CD4-positive, alpha-beta memory T cell (primary cell): ENCODE measurements at regions of chr19 and their contacts with region 1.

Region 1: DNA sequence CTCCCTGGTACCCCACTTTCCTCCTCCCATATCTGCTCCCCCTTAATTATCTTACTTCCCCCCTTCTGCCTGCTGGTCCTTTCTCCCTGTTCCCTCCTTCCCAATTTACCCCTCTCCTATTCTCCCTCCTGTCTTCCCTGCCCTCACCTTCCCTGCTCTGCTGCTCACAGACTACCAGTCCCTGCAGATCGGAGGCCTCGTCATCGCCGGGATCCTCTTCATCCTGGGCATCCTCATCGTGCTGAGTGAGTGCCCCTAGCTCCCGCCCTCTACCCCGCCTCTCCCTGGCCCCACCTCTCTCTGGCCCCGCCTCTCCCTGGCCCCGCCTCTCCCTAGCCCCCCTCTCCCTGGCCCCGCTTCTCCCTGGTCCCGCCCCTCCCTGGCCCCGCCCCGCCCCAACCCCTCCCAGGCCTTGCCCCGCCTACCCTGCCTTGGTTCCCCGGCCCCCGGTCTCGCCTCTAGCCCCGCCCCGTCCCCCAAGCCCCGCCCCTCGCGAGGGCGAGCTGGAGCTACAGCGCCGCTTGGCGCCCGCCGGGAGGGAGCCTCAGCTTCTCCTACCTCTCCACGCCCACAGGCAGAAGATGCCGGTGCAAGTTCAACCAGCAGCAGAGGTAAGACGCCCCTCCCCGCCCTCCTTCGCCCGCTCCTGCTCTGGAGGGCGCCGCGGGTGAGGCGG is 2.0 kb upstream of the FXYD7 start:
- DNase-seq: peak; percentile 92 to 94 (median 93)
- H3K4me3 ChIP-seq: peak overlapping the region; percentile 24 to 75
- H3K4me3 Mint-ChIP-seq: peak overlapping the region; percentile 82 to 96 (median 88)
- H3K27ac ChIP-seq: no peak overlapping the region
- H3K27ac Mint-ChIP-seq: peak overlapping the region; percentile 88 to 96 (median 90)
- H3K4me1 ChIP-seq: peaks cover 46% of the 10 kb centered on the region
- H3K4me1 Mint-ChIP-seq: peaks cover 28 to 53% (median 39%) of the 10 kb centered on the region in 4 donors
- H3K27me3 ChIP-seq: no peaks in the 10 kb centered on the region
- H3K27me3 Mint-ChIP-seq: no peaks in the 10 kb centered on the region

Region 2: DNA sequence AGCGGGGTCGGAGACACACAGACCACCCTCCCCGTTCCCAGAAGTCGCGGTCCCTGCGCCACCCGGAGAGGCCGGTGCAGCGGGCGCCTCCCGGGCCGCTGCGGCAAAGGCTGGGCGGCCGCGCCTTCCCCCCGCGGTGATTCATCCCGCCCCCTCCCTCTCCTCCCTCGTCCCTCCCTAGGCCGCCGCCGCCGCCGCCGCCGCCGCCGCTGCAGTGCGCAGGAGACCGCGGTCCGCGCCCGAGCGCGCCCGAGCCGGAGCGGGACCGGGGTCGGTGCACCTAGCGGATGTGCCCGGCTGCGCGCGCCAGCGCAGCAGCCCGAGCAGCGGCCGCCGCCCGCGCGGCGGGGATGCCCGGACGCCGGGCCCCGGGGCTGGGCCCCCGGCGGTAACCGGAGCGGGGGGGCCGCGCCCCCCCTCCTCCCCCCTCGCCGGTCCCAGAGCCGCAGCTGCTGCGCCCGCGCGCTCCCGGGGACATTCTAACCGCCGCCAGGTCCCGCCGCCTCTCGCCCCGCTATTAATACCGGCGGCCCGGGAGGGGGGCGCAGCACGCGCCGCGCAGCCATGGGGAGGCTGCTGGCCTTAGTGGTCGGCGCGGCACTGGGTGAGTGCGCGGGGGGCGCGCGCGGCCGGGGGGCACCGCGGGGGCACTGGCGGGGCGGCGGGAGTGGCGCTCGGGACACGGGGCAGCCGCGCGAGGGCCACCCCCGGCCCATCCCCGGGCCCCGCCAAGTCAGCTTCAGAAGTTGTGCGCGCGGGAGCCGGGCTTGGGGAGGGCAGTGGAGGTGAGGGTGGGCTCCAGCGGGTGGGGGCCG is 110.6 kb before region 1 on chr19 and contains the start of gene SCN1B:
- CTCF ChIA-PET with region 1: no interaction called
- POLR2A ChIA-PET with region 1: no interaction called
- intact Hi-C with region 1: no loop called
- DNase-seq: peak; percentile 39 to 67 (median 42)
- H3K4me3 ChIP-seq: peak within 1 kb of the TSS in 1 of 2 donors; percentile 35
- H3K4me3 Mint-ChIP-seq: peak within 1 kb of the TSS; percentile 75 to 88 (median 84)
- H3K27ac ChIP-seq: no peak within 1 kb of the TSS
- H3K27ac Mint-ChIP-seq: peak within 1 kb of the TSS in 4 of 7 donors; percentile 36 to 71 (median 44)
- H3K4me1 ChIP-seq: peaks cover 13% of the 10 kb centered on the region
- H3K4me1 Mint-ChIP-seq: peaks cover 7 to 10% (median 8%) of the 10 kb centered on the region in 4 donors
- H3K27me3 ChIP-seq: no peaks in the 10 kb centered on the region
- H3K27me3 Mint-ChIP-seq: peaks cover 7% of the 10 kb centered on the region in 2 donors
- total RNA-seq, gene SCN1B: 1.4 to 1.5 TPM

Region 3: DNA sequence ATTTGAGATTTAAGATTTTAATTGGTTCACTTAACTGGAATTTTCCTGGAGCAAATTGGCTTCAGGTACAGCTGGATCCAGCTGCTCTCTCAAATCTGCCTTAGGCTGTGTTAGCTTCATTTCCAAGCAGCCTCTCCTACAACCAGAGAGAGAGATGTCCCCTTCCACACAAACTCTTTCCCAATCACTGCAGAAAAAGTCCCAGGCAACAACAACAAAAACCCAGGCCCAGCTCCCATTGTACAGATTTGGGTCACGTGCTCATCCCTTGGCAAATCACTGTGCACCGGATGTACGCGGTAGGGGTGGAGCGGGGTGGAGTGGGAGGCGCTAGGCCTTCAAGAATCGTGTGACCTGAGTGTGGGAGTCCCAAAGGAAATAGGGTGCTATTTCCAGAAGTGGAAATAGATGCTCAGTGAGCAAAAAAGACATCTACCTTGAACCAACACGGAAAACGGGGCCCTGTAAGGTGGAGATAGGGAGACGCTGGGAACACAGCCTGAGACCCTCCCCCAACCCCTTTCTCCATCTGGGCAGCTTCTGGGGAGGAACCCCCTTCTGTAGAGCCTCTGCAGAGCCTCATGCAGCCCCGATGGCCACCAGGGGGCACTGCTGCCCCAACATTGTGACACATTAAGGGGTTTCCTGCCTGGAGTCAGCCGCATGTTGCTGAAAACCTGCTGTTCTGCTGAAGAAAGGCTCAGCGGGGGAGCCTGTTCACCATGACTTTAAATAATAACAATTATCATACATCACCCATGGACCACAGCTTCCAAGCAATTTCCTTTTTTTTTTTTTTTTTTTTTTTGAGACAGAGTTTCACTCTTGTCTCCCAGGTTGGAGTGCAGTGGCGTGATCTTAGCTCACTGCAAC is 74.2 kb before region 1 on chr19:
- CTCF ChIA-PET with region 1: interaction called, 26 read pairs
- POLR2A ChIA-PET with region 1: interaction called, 3 read pairs
- intact Hi-C with region 1: loop called (anchors 1 kb)
- DNase-seq: peak; percentile 83 to 85 (median 85)
- H3K4me3 ChIP-seq: no peak overlapping the region
- H3K4me3 Mint-ChIP-seq: no peak overlapping the region
- H3K27ac ChIP-seq: no peak overlapping the region
- H3K27ac Mint-ChIP-seq: peak overlapping the region in 6 of 7 donors; percentile 43 to 83 (median 71)
- H3K4me1 ChIP-seq: peaks cover 6% of the 10 kb centered on the region
- H3K4me1 Mint-ChIP-seq: peaks cover 4 to 10% (median 6%) of the 10 kb centered on the region in 4 donors
- H3K27me3 ChIP-seq: no peaks in the 10 kb centered on the region
- H3K27me3 Mint-ChIP-seq: peaks cover 1 to 2% of the 10 kb centered on the region in 2 donors

Region 4: GRCh38 chr19:35124098-35125060 is 16.7 kb before region 1 on chr19:
- CTCF ChIA-PET with region 1: interaction called, 10 read pairs
- POLR2A ChIA-PET with region 1: interaction called, 23 read pairs
- intact Hi-C with region 1: no loop called
- DNase-seq: peak; percentile 83 to 85 (median 83)
- H3K4me3 ChIP-seq: peak overlapping the region; percentile 40 to 57
- H3K4me3 Mint-ChIP-seq: peak overlapping the region; percentile 77 to 88 (median 84)
- H3K27ac ChIP-seq: peak overlapping the region; percentile 47
- H3K27ac Mint-ChIP-seq: peak overlapping the region; percentile 58 to 90 (median 86)
- H3K4me1 ChIP-seq: peaks cover 13% of the 10 kb centered on the region
- H3K4me1 Mint-ChIP-seq: peaks cover 9 to 16% (median 12%) of the 10 kb centered on the region in 4 donors
- H3K27me3 ChIP-seq: no peaks in the 10 kb centered on the region
- H3K27me3 Mint-ChIP-seq: no peaks in the 10 kb centered on the region

Region 5: GRCh38 chr19:35162471-35163326 is 21.6 kb after region 1 on chr19:
- CTCF ChIA-PET with region 1: interaction called, 11 read pairs
- POLR2A ChIA-PET with region 1: interaction called, 109 read pairs
- intact Hi-C with region 1: no loop called
- DNase-seq: no peak
- H3K4me3 ChIP-seq: no peak overlapping the region
- H3K4me3 Mint-ChIP-seq: peak overlapping the region in 1 of 8 donors; percentile 15
- H3K27ac ChIP-seq: no peak overlapping the region
- H3K27ac Mint-ChIP-seq: peak overlapping the region; percentile 36 to 88 (median 70)
- H3K4me1 ChIP-seq: peaks cover 70% of the 10 kb centered on the region
- H3K4me1 Mint-ChIP-seq: peaks cover 31 to 81% (median 61%) of the 10 kb centered on the region in 4 donors
- H3K27me3 ChIP-seq: no peaks in the 10 kb centered on the region
- H3K27me3 Mint-ChIP-seq: no peaks in the 10 kb centered on the region

Region 6: DNA sequence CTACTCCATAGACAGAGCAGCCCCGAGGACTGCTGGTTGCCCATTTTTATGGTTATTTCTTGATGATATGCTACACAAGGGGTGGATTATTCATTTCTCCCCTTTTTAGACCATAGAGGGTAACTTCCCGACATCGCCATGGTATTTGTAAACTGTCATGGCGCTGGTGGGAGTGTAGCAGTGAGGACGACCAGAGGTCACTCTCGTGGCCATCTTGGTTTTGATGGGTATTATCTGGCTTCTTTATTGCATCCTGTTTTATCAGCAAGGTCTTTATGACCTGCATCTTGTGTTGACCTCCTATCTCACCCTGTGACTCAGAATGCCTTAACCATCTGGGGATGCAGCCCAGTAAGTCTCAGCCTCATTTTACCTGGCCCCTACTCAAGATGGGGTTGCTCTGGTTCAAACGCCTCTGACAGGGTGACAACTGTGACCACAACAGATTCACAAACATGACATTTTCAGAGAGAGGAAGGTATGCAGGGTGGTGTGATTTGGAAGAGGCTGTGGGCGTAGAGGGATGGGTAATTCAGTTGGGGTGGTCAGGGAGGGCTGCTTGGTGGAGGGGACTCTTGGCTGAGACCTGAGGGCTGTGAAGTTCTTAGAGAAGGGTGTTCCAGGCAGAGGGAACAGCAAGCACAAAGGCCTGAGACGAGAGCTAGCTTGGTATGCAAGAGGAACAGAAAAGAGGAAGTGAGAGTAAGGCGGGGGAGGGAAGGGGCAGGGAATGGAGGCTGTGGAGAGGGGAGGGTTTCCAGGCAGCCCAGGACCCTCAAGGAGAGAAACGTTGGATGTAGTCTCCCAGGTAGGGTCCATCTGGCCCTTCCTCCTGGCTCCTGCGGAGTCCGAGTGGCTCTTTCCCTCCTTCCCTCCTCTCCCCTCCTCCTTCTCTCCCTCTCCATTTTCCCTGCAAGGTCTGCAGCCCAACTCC is 64.0 kb after region 1 on chr19:
- CTCF ChIA-PET with region 1: interaction called, 6 read pairs
- POLR2A ChIA-PET with region 1: interaction called, 112 read pairs
- intact Hi-C with region 1: loop called (anchors 2 kb)
- DNase-seq: no peak
- H3K4me3 ChIP-seq: no peak overlapping the region
- H3K4me3 Mint-ChIP-seq: peak overlapping the region in 7 of 8 donors; percentile 47 to 85 (median 63)
- H3K27ac ChIP-seq: peak overlapping the region; percentile 75
- H3K27ac Mint-ChIP-seq: peak overlapping the region; percentile 93 to 100 (median 99)
- H3K4me1 ChIP-seq: peaks cover 74% of the 10 kb centered on the region
- H3K4me1 Mint-ChIP-seq: peaks cover 53 to 92% (median 63%) of the 10 kb centered on the region in 4 donors
- H3K27me3 ChIP-seq: no peaks in the 10 kb centered on the region
- H3K27me3 Mint-ChIP-seq: no peaks in the 10 kb centered on the region

Region 7: DNA sequence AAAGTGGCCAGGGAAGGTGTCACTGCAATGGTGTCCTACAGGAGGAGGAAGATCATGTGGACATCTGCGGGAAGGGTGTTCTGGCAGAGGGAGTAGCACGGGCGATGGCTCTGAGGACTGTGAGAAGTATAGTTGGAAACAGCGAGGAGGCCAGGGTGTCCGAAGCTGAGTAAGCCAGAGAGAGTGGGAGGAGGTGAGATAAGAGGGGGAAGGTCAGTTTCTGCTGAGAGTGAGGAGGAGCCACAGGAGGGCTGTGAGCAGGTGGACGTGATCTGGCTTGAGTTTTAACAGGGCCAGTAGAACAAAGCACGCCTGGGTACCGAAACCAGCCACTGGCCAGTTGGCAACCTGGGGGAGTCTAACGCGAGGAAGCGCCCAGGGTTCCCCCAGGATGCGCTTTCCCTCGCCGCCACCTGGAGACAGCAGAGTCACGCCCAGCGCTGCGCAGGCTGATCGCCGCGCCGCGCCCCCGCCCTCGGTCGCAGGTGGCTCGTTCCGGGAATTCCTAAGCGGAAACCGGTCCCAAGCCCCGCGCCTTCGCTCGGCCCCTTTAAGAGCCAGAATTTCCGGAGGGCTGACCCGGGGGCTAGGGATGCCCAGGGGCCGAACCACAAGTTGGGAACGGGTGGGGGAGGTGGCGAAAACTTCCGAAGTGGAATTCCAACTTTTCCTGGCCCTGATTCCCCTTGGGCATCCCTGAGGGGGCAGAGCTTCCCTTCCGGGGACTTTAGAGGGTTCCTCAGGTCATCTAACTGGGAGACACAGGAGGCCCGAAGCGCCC is 106.6 kb after region 1 on chr19:
- CTCF ChIA-PET with region 1: interaction called, 3 read pairs
- POLR2A ChIA-PET with region 1: interaction called, 5 read pairs
- intact Hi-C with region 1: loop called (anchors 2 kb)
- DNase-seq: peak in 4 of 5 donors; percentile 48 to 53 (median 51)
- H3K4me3 ChIP-seq: peak overlapping the region; percentile 94
- H3K4me3 Mint-ChIP-seq: peak overlapping the region; percentile 91 to 94 (median 93)
- H3K27ac ChIP-seq: peak overlapping the region; percentile 61
- H3K27ac Mint-ChIP-seq: peak overlapping the region; percentile 88 to 97 (median 91)
- H3K4me1 ChIP-seq: peaks cover 24% of the 10 kb centered on the region
- H3K4me1 Mint-ChIP-seq: peaks cover 18 to 52% (median 32%) of the 10 kb centered on the region in 4 donors
- H3K27me3 ChIP-seq: no peaks in the 10 kb centered on the region
- H3K27me3 Mint-ChIP-seq: no peaks in the 10 kb centered on the region

Region 8: GRCh38 chr19:35347171-35347929 is 206.2 kb after region 1 on chr19 and contains the start of gene FFAR1:
- CTCF ChIA-PET with region 1: interaction called, 4 read pairs
- POLR2A ChIA-PET with region 1: interaction called, 3 read pairs
- intact Hi-C with region 1: loop called (anchors 10 kb)
- DNase-seq: peak; percentile 62 to 85 (median 64)
- H3K4me3 ChIP-seq: peak within 1 kb of the TSS in 1 of 2 donors; percentile 0
- H3K4me3 Mint-ChIP-seq: peak within 1 kb of the TSS; percentile 67 to 87 (median 76)
- H3K27ac ChIP-seq: peak within 1 kb of the TSS; percentile 8
- H3K27ac Mint-ChIP-seq: peak within 1 kb of the TSS; percentile 53 to 95 (median 91)
- H3K4me1 ChIP-seq: peaks cover 28% of the 10 kb centered on the region
- H3K4me1 Mint-ChIP-seq: peaks cover 22 to 32% (median 27%) of the 10 kb centered on the region in 4 donors
- H3K27me3 ChIP-seq: no peaks in the 10 kb centered on the region
- H3K27me3 Mint-ChIP-seq: peaks cover 2 to 5% of the 10 kb centered on the region in 2 donors
- total RNA-seq, gene FFAR1: not detected